Endothelial cell of umbilical vein (primary cell): ENCODE measurements at regions of chr3 and their contacts with region 1.

Region 1: DNA sequence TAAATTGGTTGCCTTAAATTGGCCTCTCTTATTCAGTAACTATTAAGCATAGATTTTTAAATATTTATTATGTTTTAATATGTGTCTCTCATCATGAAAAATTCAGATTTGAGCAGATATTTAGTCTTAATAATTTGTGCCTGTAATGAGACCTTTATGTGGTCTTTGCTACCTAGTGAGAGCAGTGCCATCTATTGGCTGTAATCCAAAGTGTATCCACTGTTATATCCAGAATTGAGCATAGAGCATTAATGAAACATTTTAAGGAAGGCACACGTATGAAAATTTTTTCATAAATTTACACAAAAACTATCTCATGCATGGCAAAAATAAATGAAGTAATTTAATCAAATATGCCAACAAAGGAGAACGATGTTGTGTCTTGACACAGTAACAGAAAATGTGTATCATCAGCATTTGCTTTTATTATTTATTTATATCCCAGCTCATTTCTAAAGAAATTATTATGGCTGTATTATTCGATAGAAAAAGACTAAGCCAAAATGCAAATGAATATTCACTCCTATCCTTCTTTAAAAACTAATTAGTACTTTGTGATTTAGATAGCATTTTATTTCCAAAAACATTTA is 203.5 kb downstream of the RSRC1 start:
- DNase-seq: peak; percentile 43
- H3K4me3 ChIP-seq: no peak overlapping the region
- H3K27ac ChIP-seq: no peak overlapping the region
- H3K4me1 ChIP-seq: no peaks in the 10 kb centered on the region
- H3K27me3 ChIP-seq: no peaks in the 10 kb centered on the region
- CTCF ChIP-seq: peak in 1 of 2 donors; percentile 35
- POLR2A ChIP-seq: no peak

Region 2: DNA sequence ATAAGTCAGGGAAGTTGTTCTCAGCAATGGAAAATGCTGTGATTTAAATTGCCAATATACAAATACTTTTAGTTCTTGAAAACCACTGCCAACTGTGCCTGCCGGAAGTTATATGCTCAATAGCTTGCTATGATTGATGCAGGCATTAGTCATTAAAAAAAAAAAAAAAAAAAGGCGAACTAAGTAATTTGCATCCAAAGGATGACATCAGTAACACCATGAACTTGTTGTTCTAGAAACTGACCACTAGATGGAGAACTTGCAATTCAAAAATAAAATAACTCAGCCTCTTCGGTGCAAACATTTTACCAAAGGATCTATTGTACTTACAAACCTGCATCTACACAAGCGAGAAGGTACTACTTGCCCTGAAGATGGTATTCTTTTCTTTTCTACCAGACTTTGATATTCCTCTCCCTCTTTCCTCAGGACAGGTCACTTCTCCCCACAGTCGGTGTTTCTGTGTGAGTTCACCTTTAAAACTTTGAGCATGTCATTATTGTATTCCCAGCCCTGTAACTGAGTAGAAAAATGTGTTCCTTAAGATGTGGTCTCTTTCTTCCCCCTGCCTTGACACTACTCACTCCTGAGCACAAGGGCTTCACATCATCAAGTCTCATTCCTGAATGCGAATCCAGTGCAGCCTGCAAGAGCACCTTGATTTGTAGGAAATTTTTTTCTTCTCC is 695.2 kb before region 1 on chr3:
- CTCF ChIA-PET with region 1: interaction called, 3 read pairs
- POLR2A ChIA-PET with region 1: no interaction called
- dilution Hi-C with region 1: no loop called
- intact Hi-C with region 1: loop called (anchors 1 kb)
- DNase-seq: peak; percentile 66
- H3K4me3 ChIP-seq: no peak overlapping the region
- H3K27ac ChIP-seq: no peak overlapping the region
- H3K4me1 ChIP-seq: peaks cover 3% of the 10 kb centered on the region
- H3K27me3 ChIP-seq: peaks cover 2 to 44% of the 10 kb centered on the region in 2 experiments
- CTCF ChIP-seq: peak; percentile 38 to 45
- POLR2A ChIP-seq: no peak

Region 3: GRCh38 chr3:157865352-157866000 is 448.0 kb before region 1 on chr3:
- CTCF ChIA-PET with region 1: interaction called, 5 read pairs
- POLR2A ChIA-PET with region 1: no interaction called
- dilution Hi-C with region 1: no loop called
- intact Hi-C with region 1: loop called (anchors 1 kb)
- DNase-seq: peak; percentile 26
- H3K4me3 ChIP-seq: no peak overlapping the region
- H3K27ac ChIP-seq: no peak overlapping the region
- H3K4me1 ChIP-seq: no peaks in the 10 kb centered on the region
- H3K27me3 ChIP-seq: no peaks in the 10 kb centered on the region
- CTCF ChIP-seq: peak; percentile 74 to 79
- POLR2A ChIP-seq: no peak

Region 4: DNA sequence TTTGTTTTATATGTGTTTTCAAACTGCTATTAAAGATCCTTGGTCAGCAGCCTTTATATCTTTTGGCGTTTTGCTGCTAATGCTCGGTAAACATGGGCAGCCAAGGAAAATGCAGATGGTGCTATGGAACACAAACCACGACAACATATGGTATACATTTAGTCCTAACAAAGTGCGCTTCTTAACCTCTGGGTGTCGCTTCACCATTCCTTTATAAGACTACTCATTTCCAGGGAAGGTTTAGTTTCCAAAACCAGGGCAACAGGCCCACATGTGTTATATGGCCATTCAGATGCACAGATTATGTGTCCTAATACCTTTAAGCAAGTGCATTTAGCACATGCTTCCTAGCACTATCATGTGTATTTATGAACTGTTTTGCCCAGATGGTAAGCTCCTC is 221.9 kb before region 1 on chr3:
- CTCF ChIA-PET with region 1: interaction called, 9 read pairs
- POLR2A ChIA-PET with region 1: no interaction called
- dilution Hi-C with region 1: no loop called
- intact Hi-C with region 1: loop called (anchors 2 kb)
- DNase-seq: peak; percentile 34
- H3K4me3 ChIP-seq: no peak overlapping the region
- H3K27ac ChIP-seq: no peak overlapping the region
- H3K4me1 ChIP-seq: no peaks in the 10 kb centered on the region
- H3K27me3 ChIP-seq: peaks cover 43 to 86% of the 10 kb centered on the region in 2 experiments
- CTCF ChIP-seq: peak; percentile 27 to 29
- POLR2A ChIP-seq: no peak

Region 5: GRCh38 chr3:158167737-158168471 is 145.5 kb before region 1 on chr3:
- CTCF ChIA-PET with region 1: no interaction called
- POLR2A ChIA-PET with region 1: no interaction called
- dilution Hi-C with region 1: no loop called
- intact Hi-C with region 1: loop called (anchors 5 kb)
- DNase-seq: peak; percentile 75
- H3K4me3 ChIP-seq: no peak overlapping the region
- H3K27ac ChIP-seq: no peak overlapping the region
- H3K4me1 ChIP-seq: peaks cover 21% of the 10 kb centered on the region
- H3K27me3 ChIP-seq: no peaks in the 10 kb centered on the region
- CTCF ChIP-seq: no peak
- POLR2A ChIP-seq: no peak

Region 6: DNA sequence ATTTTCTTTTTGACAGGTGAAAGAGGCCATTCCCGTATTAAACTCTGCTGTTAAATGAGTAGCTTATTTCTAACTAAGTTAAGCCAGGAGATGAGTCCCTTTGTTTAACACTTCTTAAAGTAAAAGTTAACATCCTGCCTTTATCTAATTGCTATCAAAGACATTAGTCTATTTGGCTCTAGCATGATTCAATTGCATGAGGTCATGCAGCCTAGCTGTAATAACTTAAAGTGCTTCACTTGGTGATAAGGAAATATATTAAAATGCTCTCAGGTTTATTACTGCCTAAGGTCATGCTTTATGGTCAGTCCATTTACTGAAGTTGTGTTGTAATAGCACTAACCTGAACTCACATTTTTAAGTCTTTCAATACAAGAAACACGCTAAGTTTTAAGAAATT is 175.2 kb after region 1 on chr3:
- CTCF ChIA-PET with region 1: no interaction called
- POLR2A ChIA-PET with region 1: no interaction called
- dilution Hi-C with region 1: no loop called
- intact Hi-C with region 1: no loop called
- DNase-seq: peak; percentile 27
- H3K4me3 ChIP-seq: no peak overlapping the region
- H3K27ac ChIP-seq: no peak overlapping the region
- H3K4me1 ChIP-seq: no peaks in the 10 kb centered on the region
- H3K27me3 ChIP-seq: no peaks in the 10 kb centered on the region
- CTCF ChIP-seq: no peak
- POLR2A ChIP-seq: no peak

Region 7: DNA sequence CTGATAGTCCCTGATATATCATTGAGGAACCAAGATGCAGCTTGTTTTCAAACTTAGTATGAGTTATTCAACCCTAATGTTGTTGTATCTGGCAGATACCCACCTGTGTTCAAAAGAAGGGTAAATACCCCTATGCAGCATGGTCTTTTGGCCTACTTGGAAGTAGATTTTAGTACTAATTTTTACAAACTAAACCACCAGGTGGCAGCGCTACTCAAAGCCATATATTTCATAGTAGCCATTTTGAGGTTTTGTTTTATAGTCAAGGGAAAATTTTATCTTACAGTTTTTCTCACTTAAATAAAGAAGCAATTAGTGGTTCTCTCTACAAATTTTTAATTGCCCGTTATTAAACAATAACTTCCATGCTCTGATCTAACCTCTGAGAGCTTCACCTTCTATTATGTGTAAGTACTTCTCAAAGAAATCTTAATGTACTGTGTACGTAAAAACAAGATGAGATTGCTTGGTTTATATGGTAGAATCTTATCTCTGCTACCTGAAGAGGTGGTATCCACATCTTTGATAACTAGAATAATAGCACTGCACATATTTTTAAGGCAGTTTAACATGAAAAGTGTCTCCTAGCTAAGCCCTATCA is 226.1 kb after region 1 on chr3:
- CTCF ChIA-PET with region 1: no interaction called
- POLR2A ChIA-PET with region 1: no interaction called
- dilution Hi-C with region 1: no loop called
- intact Hi-C with region 1: loop called (anchors 10 kb)
- DNase-seq: peak; percentile 70
- H3K4me3 ChIP-seq: no peak overlapping the region
- H3K27ac ChIP-seq: no peak overlapping the region
- H3K4me1 ChIP-seq: no peaks in the 10 kb centered on the region
- H3K27me3 ChIP-seq: no peaks in the 10 kb centered on the region
- CTCF ChIP-seq: peak; percentile 37 to 41
- POLR2A ChIP-seq: no peak